ENCODE measurements at regions of chr14 and their contacts with region 1.

Region 1: GRCh38 chr14:63394841-63395240 is 76.1 kb upstream of the GPHB5 start:
- DNase-seq: no peak

Region 2: GRCh38 chr14:63543000-63543825 is 148.4 kb after region 1 on chr14 and contains the start of gene PPP2R5E:
- intact Hi-C with region 1: loop called in 1 of 2 experiments (anchors 5 kb)
- DNase-seq: peak; percentile 99
- total RNA-seq, gene PPP2R5E: 34.4 to 44.5 TPM